Mammary epithelial cell (primary cell): ENCODE measurements at regions of chr9 and their contacts with region 1.

Region 1: GRCh38 chr9:105713260-105714019 is 19.1 kb downstream of the TMEM38B start:
- DNase-seq: no peak
- H3K4me3 ChIP-seq: no peak overlapping the region
- H3K27ac ChIP-seq: no peak overlapping the region
- H3K4me1 ChIP-seq: no peaks in the 10 kb centered on the region
- H3K27me3 ChIP-seq: no peaks in the 10 kb centered on the region
- CTCF ChIP-seq: no peak

Region 2: DNA sequence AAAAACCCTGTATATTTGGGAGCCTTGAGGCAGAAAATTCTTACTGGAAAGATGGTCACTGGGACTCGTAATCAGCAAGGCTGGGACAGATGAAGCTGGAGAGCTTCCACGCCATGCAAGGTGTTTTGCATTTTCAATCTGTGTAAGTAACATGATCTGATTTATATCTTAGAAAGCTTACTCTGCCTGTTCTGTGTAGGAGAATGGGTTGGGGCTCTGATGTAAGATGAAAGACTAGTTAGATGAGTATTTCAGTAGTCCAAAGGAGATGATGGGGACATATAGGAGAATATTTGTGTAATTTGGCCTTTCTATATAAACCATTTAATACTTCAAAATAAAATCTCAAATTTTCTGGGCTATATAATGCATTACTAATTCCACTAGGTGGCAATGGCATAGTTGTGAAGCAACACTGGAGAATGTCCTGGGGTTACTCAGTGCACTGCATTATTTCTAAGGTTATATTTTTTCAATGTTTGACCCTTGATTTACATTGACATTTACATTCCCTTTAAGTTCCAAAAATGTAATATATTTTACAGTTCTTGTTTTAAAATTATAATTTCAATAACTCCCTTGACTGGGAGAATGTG is 287.5 kb before region 1 on chr9:
- CTCF ChIA-PET with region 1: no interaction called
- dilution Hi-C with region 1: no loop called
- in situ Hi-C with region 1: no loop called
- intact Hi-C with region 1: loop called (anchors 2 kb)
- DNase-seq: no peak
- H3K4me3 ChIP-seq: no peak overlapping the region
- H3K27ac ChIP-seq: no peak overlapping the region
- H3K4me1 ChIP-seq: no peaks in the 10 kb centered on the region
- H3K27me3 ChIP-seq: no peaks in the 10 kb centered on the region
- CTCF ChIP-seq: peak; percentile 48 to 58

Region 3: GRCh38 chr9:105541838-105542237 is 171.6 kb before region 1 on chr9:
- CTCF ChIA-PET with region 1: no interaction called
- dilution Hi-C with region 1: no loop called
- in situ Hi-C with region 1: no loop called
- intact Hi-C with region 1: no loop called
- DNase-seq: peak; percentile 1
- H3K4me3 ChIP-seq: no peak overlapping the region
- H3K27ac ChIP-seq: no peak overlapping the region
- H3K4me1 ChIP-seq: no peaks in the 10 kb centered on the region
- H3K27me3 ChIP-seq: no peaks in the 10 kb centered on the region
- CTCF ChIP-seq: no peak

Region 4: GRCh38 chr9:105647595-105648349 is 65.7 kb before region 1 on chr9:
- CTCF ChIA-PET with region 1: no interaction called
- dilution Hi-C with region 1: loop called (anchors 5 kb)
- in situ Hi-C with region 1: no loop called
- intact Hi-C with region 1: no loop called
- DNase-seq: no peak
- H3K4me3 ChIP-seq: no peak overlapping the region
- H3K27ac ChIP-seq: no peak overlapping the region
- H3K4me1 ChIP-seq: no peaks in the 10 kb centered on the region
- H3K27me3 ChIP-seq: no peaks in the 10 kb centered on the region
- CTCF ChIP-seq: no peak